CD8-positive, alpha-beta T cell (primary cell): ENCODE measurements at regions of chr9 and their contacts with region 1.

Region 1: DNA sequence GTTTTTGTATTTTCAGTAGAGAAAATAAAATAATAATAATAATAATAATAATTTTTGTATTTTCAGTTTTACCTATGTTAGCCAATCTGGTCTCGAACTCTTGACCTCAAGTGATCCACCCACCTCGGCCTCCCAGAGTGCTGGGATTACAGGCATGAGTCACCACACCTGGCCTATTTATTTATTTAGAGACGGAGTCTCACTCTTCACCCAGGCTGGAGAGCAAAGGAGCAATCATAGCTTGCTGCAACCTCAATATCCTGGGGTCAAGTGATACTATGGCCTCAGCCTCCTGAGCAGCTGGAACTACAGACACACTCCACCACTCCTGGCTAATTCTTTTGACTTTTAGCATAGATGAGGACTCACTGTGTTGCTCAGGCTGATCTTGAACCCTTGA is 167.5 kb downstream of the TLE1 start:
- DNase-seq: no peak
- ATAC-seq: no peak
- H3K4me3 ChIP-seq: no peak overlapping the region
- H3K4me3 Mint-ChIP-seq: no peak overlapping the region
- H3K27ac ChIP-seq: no peak overlapping the region
- H3K27ac Mint-ChIP-seq: no peak overlapping the region
- H3K4me1 ChIP-seq: no peaks in the 10 kb centered on the region
- H3K4me1 Mint-ChIP-seq: no peaks in the 10 kb centered on the region
- H3K27me3 ChIP-seq: no peaks in the 10 kb centered on the region
- H3K27me3 Mint-ChIP-seq: no peaks in the 10 kb centered on the region
- CTCF ChIP-seq: no peak

Region 2: DNA sequence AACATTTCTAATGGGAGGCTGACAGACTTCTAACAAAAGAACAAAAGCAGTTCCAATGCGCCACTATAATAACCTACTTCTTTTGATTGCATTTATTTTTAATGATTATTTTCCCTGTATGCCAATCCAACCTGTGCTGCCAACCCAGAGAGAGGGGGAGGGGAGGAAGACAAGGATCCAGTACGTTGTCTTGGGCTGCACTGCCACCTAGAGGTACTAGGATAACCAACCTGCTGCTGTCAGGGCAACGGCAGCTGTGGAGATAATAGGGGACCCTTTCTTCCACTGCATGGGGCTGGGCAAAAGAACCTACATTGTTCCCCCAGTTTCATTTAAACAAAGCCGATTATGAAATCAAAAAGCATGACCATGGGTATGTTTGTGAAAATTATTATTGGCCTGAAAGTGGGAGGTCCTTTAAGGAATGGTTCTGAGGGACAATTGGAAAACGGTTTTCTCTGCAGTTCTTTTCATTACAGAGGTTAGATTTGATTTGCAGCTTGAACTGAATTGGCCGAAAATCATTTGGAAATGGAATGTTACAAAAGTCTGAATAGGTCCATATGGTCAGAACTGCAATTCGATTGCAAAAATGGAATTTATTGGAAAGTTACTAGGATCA is 1439.7 kb after region 1 on chr9:
- CTCF ChIA-PET with region 1: no interaction called
- POLR2A ChIA-PET with region 1: no interaction called
- intact Hi-C with region 1: loop called in 1 of 2 experiments (anchors 5 kb)
- DNase-seq: peak in 5 of 9 experiments; percentile 5 to 49 (median 18)
- ATAC-seq: no peak
- H3K4me3 ChIP-seq: no peak overlapping the region
- H3K4me3 Mint-ChIP-seq: no peak overlapping the region
- H3K27ac ChIP-seq: no peak overlapping the region
- H3K27ac Mint-ChIP-seq: no peak overlapping the region
- H3K4me1 ChIP-seq: no peaks in the 10 kb centered on the region
- H3K4me1 Mint-ChIP-seq: no peaks in the 10 kb centered on the region
- H3K27me3 ChIP-seq: no peaks in the 10 kb centered on the region
- H3K27me3 Mint-ChIP-seq: no peaks in the 10 kb centered on the region
- CTCF ChIP-seq: peak; percentile 26